Activated naive CD4-positive, alpha-beta T cell treated with anti-CD3 and anti-CD28 coated beads, Interleukin-2, amount 10 ng/mL, durations not matched to agents 7 days and 5 days (primary cell): ENCODE measurements at regions of chr1 and their contacts with region 1.

Region 1: GRCh38 chr1:59699227-59699847 is 115.4 kb upstream of the HOOK1 start:
- DNase-seq: peak; percentile 26
- H3K4me3 Mint-ChIP-seq: no peak overlapping the region
- H3K27ac Mint-ChIP-seq: no peak overlapping the region
- H3K4me1 Mint-ChIP-seq: peaks cover 29% of the 10 kb centered on the region
- H3K27me3 Mint-ChIP-seq: peaks cover 4% of the 10 kb centered on the region

Region 2: GRCh38 chr1:58739856-58740466 is 959.4 kb before region 1 on chr1:
- CTCF ChIA-PET with region 1: interaction called, 47 read pairs
- DNase-seq: no peak
- H3K4me3 Mint-ChIP-seq: no peak overlapping the region
- H3K27ac Mint-ChIP-seq: no peak overlapping the region
- H3K4me1 Mint-ChIP-seq: peaks cover 5% of the 10 kb centered on the region
- H3K27me3 Mint-ChIP-seq: peaks cover 16% of the 10 kb centered on the region

Region 3: GRCh38 chr1:58783090-58783992 is 916.0 kb before region 1 on chr1:
- CTCF ChIA-PET with region 1: interaction called, 11 read pairs
- DNase-seq: peak; percentile 67
- H3K4me3 Mint-ChIP-seq: peak overlapping the region; percentile 81
- H3K27ac Mint-ChIP-seq: peak overlapping the region; percentile 95
- H3K4me1 Mint-ChIP-seq: peaks cover 33% of the 10 kb centered on the region
- H3K27me3 Mint-ChIP-seq: peaks cover 27% of the 10 kb centered on the region

Region 4: GRCh38 chr1:59759156-59759925 is 60.0 kb after region 1 on chr1:
- CTCF ChIA-PET with region 1: interaction called, 17 read pairs
- DNase-seq: peak; percentile 79
- H3K4me3 Mint-ChIP-seq: no peak overlapping the region
- H3K27ac Mint-ChIP-seq: no peak overlapping the region
- H3K4me1 Mint-ChIP-seq: peaks cover 9% of the 10 kb centered on the region
- H3K27me3 Mint-ChIP-seq: peaks cover 4% of the 10 kb centered on the region